ENCODE measurements at regions of chr10 and their contacts with region 1.

Region 1: DNA sequence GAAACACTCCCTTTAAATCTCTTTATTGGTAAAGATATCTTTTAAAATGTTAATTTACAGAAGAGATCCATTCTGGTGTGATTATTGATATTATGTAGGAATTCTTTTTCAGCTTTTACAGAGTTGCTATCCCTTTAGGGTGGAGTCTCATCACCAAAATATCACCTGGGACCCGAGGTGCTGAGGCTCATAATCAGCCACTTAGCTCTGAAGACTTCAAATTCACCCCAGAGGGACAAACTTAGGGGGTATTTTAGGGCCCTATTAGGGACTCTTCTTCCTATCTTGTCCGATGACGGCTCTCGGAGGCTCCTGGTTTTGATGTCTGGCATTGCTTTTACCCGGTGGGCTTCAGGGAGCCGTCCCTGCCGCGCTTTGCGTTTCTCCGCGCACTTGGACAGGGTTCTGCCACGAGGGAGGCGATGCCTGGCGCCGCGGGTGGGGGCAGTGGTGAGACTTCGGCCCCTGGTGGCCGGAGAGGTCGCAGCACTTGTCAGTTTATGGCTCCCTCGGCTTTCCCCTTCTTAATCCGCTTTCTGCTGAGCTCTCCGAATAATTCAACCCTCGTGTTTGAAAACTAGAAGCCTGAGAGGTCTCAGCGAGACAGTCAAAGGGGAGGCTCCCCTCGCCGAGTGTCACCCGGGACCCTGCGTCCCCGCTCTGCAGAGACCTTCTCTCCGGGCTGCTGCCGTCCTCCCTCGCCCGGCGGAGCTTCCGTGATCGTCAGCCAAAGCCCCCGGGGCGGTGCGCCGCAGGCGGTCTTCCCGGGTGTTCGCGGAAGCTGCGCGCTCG is 27.8 kb downstream of the RBM20 start:
- DNase-seq: peak; percentile 86
- ATAC-seq: peak; percentile 98
- H3K4me3 Mint-ChIP-seq: peak overlapping the region; percentile 76
- H3K27ac Mint-ChIP-seq: peak overlapping the region; percentile 71
- H3K4me1 Mint-ChIP-seq: peaks cover 3% of the 10 kb centered on the region
- H3K27me3 Mint-ChIP-seq: no peaks in the 10 kb centered on the region

Region 2: DNA sequence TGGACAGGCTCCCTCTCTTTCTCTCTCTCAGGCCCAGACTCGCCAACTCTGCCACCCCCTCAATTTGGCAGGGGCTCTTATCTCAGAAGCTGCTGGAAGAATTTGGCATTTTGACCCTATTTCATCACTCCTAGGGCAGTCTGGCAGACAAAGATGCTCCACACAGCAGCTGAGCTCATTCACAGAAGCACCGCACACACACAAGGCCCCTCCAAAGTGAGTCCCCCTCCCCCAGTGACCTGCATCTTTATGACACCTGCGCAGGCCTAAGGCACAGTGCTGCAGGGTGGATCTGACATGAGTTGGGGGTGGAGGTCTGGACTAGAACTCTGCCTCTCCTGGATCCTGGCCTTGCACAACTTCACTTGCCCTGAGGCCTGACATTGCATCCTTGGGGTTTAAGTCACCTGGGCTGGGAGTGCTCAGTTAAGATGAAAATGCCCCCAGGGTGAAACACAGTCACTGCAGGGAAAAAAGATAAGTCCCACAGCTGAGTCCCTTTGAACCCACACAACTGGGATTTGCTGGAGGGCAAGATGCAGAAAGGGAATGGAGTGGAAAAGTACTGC is 215.4 kb before region 1 on chr10:
- CTCF ChIA-PET with region 1: no interaction called
- POLR2A ChIA-PET with region 1: no interaction called
- intact Hi-C with region 1: no loop called
- DNase-seq: no peak
- ATAC-seq: no peak
- H3K4me3 Mint-ChIP-seq: no peak overlapping the region
- H3K27ac Mint-ChIP-seq: no peak overlapping the region
- H3K4me1 Mint-ChIP-seq: peaks cover 36% of the 10 kb centered on the region
- H3K27me3 Mint-ChIP-seq: no peaks in the 10 kb centered on the region

Region 3: GRCh38 chr10:110617425-110618229 is 54.4 kb before region 1 on chr10:
- CTCF ChIA-PET with region 1: interaction called, 33 read pairs
- POLR2A ChIA-PET with region 1: interaction called, 4 read pairs
- intact Hi-C with region 1: no loop called
- DNase-seq: peak; percentile 57
- ATAC-seq: peak; percentile 45
- H3K4me3 Mint-ChIP-seq: no peak overlapping the region
- H3K27ac Mint-ChIP-seq: peak overlapping the region; percentile 74
- H3K4me1 Mint-ChIP-seq: peaks cover 60% of the 10 kb centered on the region
- H3K27me3 Mint-ChIP-seq: no peaks in the 10 kb centered on the region

Region 4: GRCh38 chr10:110643653-110644597 is 28.1 kb before region 1 on chr10 and contains the start of gene RBM20:
- CTCF ChIA-PET with region 1: interaction called, 13 read pairs
- POLR2A ChIA-PET with region 1: no interaction called
- intact Hi-C with region 1: no loop called
- DNase-seq: peak; percentile 40
- ATAC-seq: peak; percentile 36
- H3K4me3 Mint-ChIP-seq: peak within 1 kb of the TSS; percentile 73
- H3K27ac Mint-ChIP-seq: peak within 1 kb of the TSS; percentile 52
- H3K4me1 Mint-ChIP-seq: peaks cover 29% of the 10 kb centered on the region
- H3K27me3 Mint-ChIP-seq: peaks cover 48% of the 10 kb centered on the region
- total RNA-seq, gene RBM20: 0.05 to 0.40 TPM

Region 5: DNA sequence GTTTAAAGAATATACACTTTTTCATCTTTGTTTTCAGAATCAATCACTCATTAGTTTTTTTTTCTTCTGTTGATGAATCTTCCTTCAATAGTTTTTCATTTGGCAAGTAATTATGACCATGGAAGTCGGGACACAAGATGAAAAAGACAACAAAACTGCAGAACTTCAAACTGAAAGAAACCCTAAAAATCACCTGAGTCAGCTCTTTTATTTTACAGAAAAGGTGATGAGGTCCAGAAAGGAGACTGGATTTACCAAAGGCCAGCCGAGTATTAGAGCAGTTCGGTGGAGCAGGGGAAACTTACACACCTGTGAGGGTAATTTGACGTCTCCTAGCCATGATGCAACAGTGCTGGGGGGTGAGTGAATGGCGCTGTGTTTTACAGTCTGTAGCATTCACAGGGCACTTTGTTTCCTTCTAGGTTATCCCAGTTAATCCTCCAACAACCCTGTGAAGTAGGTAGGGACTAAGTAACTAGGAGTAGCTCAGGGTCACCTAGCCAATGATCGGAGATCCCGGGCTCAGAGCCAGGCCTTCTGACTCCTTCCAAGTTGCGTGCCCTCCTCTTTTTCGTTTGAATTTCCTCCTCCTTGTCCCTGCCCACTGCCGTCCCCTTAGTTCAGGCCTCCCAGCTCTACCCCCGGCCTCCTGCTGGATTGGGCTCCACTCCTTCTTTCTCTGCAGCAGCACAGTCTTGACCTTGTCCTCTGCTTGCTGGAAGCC is 13.9 kb before region 1 on chr10:
- CTCF ChIA-PET with region 1: interaction called, 28 read pairs
- POLR2A ChIA-PET with region 1: no interaction called
- intact Hi-C with region 1: no loop called
- DNase-seq: no peak
- ATAC-seq: no peak
- H3K4me3 Mint-ChIP-seq: no peak overlapping the region
- H3K27ac Mint-ChIP-seq: no peak overlapping the region
- H3K4me1 Mint-ChIP-seq: peaks cover 5% of the 10 kb centered on the region
- H3K27me3 Mint-ChIP-seq: peaks cover 10% of the 10 kb centered on the region

Region 6: DNA sequence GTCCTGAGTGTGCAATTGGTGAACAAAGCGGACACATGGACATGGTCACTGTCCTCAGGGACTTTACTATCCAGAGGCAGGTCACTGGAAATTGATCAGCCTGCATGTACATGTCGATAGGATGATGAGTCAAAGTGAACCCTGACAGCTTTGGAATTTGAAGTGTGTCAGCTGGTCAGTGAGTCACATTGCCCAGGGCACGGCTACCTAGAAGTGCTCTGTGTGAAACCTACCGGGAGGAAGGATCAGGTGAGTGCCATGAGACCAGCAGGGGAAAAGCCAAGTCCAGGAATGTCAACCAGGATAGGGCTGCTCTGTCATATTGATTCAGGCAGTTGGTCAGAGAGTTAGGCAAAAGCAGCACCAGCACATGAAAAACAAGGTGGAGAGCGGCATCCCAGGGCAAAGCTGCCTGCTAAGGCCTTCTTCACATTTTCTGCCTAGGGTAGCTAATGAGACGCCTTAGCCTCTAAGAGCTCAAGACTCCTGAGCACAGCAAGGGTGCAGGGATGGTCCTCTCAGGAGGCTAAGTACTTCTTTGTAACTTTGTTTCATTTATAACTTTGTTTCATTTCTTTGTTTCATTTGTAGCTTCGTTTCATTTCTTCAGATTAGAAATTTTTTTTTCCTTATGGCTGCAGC is 180.4 kb after region 1 on chr10:
- CTCF ChIA-PET with region 1: no interaction called
- POLR2A ChIA-PET with region 1: no interaction called
- intact Hi-C with region 1: no loop called
- DNase-seq: peak; percentile 73
- ATAC-seq: peak; percentile 86
- H3K4me3 Mint-ChIP-seq: peak overlapping the region; percentile 37
- H3K27ac Mint-ChIP-seq: peak overlapping the region; percentile 70
- H3K4me1 Mint-ChIP-seq: peaks cover 63% of the 10 kb centered on the region
- H3K27me3 Mint-ChIP-seq: no peaks in the 10 kb centered on the region

Measured in activated CD4-positive, alpha-beta T cell treated with anti-CD3 and anti-CD28 coated beads for 36 hours (primary cell).